Activated CD4-positive, alpha-beta memory T cell treated with anti-CD3 and anti-CD28 coated beads for 36 hours (primary cell): ENCODE measurements at regions of chr15 and their contacts with region 1.

Region 1: DNA sequence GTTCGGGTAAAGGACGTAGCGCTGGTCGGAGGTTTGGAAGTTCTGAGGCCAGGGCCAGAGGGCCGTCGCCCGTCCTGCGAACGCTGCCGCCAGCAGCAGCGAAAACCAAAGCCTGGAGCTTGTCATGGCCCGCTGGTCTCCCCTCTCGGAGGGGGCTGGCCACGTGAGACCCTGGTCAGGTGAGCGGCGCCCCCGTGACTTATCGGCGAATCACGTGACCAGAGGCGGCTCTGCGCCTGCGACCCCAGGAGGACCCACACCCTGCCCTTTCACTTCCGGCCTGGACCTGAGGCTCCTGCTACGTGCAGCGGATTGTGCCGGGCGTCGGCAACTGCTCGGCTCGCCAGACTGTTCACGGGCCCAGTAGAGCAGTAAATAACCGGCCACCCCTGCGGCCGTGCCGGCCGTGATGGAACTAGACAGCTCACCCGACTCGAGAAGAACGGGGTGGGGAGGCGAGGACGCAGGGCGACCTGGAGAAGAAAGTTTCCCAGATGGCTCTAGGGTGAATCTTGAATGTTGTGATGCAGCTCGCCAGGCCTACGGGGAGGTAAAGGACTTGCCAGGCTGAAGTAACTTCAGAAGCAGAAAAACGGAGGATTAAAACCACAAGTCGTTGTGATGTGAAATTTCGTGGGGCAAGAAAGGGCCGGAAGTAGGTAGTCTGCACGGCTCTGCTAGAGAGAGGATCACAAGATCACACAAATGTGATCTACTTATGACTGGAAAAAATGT is at the start of gene HEXA:
- DNase-seq: peak; percentile 98
- H3K4me3 Mint-ChIP-seq: peak within 1 kb of the TSS; percentile 91
- H3K27ac Mint-ChIP-seq: peak within 1 kb of the TSS; percentile 92
- H3K4me1 Mint-ChIP-seq: peaks cover 32% of the 10 kb centered on the region
- H3K27me3 Mint-ChIP-seq: peaks cover 1% of the 10 kb centered on the region
- total RNA-seq, gene HEXA: 57.5 to 59.8 TPM

Region 2: DNA sequence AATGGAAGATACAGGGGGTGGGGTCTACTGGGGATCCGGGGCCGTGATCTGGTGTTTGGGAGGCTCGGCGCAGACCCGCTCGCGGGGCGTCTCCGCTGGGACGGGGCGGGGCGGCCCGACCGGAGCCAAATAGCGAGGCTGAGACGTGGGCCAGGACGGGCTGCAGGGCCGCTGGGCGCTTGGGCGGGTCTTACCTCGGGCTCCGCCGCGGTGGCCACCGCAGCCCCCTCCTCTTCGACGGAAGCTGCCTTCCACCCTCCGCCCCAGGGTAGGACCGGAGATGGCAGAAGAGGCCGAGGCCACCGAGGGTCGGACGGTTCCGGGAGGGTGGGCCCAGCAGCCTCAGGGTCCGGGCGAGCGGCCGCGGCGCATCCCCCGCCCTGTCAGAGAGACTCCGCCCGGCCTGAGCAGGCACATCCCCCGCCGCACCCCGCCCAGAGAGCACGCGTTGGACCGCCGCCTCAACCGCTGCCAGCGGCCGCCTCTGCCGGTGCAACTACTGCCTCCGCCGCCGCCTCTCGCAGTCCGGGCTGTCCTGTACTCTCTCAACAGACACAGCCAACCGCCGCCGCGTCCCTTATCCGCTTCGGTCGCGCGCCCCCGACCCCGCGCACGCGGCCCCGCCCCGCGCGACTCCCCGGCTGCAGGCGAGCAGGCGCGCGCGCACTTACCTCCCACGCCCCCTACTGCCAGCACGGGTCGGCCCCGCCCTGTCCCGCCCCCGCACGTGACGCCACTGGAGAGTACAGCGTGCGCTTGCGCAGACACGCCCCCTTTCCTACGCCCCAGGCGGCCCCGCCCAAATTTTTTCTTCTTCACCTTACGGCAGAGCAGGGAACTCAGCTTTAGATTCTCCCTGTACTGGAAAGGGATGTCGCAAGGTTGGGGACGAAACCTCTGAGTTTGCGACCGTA is 258.3 kb before region 1 on chr15 and contains the start of gene MYO9A:
- CTCF ChIA-PET with region 1: no interaction called
- POLR2A ChIA-PET with region 1: no interaction called
- intact Hi-C with region 1: loop called (anchors 5 kb)
- DNase-seq: peak; percentile 100
- H3K4me3 Mint-ChIP-seq: peak within 1 kb of the TSS; percentile 98
- H3K27ac Mint-ChIP-seq: peak within 1 kb of the TSS; percentile 98
- H3K4me1 Mint-ChIP-seq: peaks cover 34% of the 10 kb centered on the region
- H3K27me3 Mint-ChIP-seq: no peaks in the 10 kb centered on the region
- total RNA-seq, gene MYO9A: 18.3 to 20.2 TPM

Region 3: DNA sequence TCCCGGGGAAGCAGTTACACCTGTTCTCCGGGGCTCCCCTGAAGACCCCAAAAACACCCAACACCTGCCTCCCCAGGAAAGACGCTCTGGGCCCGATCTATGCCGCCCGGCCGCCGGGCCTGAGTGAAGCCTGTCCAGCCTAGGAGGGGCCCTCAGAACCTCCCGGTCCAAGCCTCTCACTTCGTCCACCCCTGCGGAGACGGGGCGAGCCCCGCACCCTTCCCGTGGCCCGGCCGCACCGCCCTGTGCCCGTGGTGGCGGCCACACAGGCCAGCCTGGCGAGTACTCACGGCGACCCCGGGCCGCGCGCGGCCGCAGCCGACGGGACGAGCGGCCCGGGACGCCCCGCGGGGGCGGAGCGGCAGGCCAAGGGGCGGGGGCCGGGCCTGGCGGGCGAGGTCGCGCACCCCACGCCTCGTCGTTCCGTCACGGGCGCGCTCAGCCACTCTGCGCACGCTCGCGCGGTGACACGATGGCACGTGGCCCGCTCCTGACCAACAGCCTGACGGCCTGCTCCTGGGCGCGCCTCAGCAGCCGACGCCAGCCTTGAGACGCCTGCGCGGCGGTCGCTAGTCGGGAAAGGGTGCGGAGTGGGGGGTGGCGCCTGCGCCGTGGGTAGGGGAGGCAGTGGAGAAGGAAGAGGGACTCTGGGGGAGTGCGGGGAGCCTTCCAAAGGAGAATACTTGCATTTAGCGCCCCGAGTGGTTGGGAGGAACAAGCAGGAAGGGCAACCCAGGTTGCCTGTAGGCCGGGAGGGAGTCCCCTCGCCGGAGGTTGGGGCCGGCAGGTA is 103.6 kb before region 1 on chr15 and contains the start of gene PARP6:
- CTCF ChIA-PET with region 1: no interaction called
- POLR2A ChIA-PET with region 1: no interaction called
- intact Hi-C with region 1: loop called (anchors 2 kb)
- DNase-seq: peak; percentile 99
- H3K4me3 Mint-ChIP-seq: peak within 1 kb of the TSS; percentile 84
- H3K27ac Mint-ChIP-seq: peak within 1 kb of the TSS; percentile 89
- H3K4me1 Mint-ChIP-seq: peaks cover 33% of the 10 kb centered on the region
- H3K27me3 Mint-ChIP-seq: no peaks in the 10 kb centered on the region
- total RNA-seq, gene PARP6: 42.8 to 44.5 TPM

Region 4: GRCh38 chr15:72319985-72320671 is 55.9 kb before region 1 on chr15 and contains the start of gene CELF6:
- CTCF ChIA-PET with region 1: no interaction called
- POLR2A ChIA-PET with region 1: no interaction called
- intact Hi-C with region 1: loop called (anchors 5 kb)
- DNase-seq: peak; percentile 79
- H3K4me3 Mint-ChIP-seq: peak within 1 kb of the TSS; percentile 78
- H3K27ac Mint-ChIP-seq: no peak within 1 kb of the TSS
- H3K4me1 Mint-ChIP-seq: peaks cover 22% of the 10 kb centered on the region
- H3K27me3 Mint-ChIP-seq: no peaks in the 10 kb centered on the region
- total RNA-seq, gene CELF6: 0.19 TPM

Region 5: DNA sequence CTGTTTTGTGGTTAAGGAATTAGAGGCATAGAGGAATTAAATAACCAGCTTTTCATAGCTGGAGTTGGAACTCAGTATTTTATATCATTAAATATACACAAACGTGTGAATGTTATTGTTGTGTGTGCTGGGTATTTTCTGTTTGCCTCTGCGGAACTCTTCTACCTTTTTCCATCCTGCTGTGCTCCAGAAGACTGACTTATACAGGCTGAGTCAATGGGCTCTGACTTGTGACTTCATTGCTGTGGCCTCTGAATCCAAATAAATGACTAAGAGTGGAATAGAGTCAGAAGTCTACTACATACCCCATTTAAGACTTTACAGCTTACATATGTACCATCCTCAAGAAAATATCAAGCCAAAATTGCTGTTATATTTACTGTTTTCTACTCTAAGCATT is 115.8 kb after region 1 on chr15:
- CTCF ChIA-PET with region 1: no interaction called
- POLR2A ChIA-PET with region 1: no interaction called
- intact Hi-C with region 1: no loop called
- DNase-seq: no peak
- H3K4me3 Mint-ChIP-seq: no peak overlapping the region
- H3K27ac Mint-ChIP-seq: no peak overlapping the region
- H3K4me1 Mint-ChIP-seq: peaks cover 60% of the 10 kb centered on the region
- H3K27me3 Mint-ChIP-seq: no peaks in the 10 kb centered on the region